ENCODE measurements at regions of chr7 and their contacts with region 1.

Region 1: GRCh38 chr7:7585253-7585928 is 18.7 kb downstream of the MIOS start:
- DNase-seq: no peak
- ATAC-seq: no peak
- H3K4me3 ChIP-seq: no peak overlapping the region
- H3K4me3 Mint-ChIP-seq: no peak overlapping the region
- H3K27ac ChIP-seq: no peak overlapping the region
- H3K27ac Mint-ChIP-seq: no peak overlapping the region
- H3K4me1 ChIP-seq: no peaks in the 10 kb centered on the region
- H3K4me1 Mint-ChIP-seq: peaks cover 10% of the 10 kb centered on the region
- H3K27me3 ChIP-seq: no peaks in the 10 kb centered on the region
- H3K27me3 Mint-ChIP-seq: no peaks in the 10 kb centered on the region
- CTCF ChIP-seq: no peak

Region 2: GRCh38 chr7:7595451-7595850 is 10.1 kb after region 1 on chr7:
- CTCF ChIA-PET with region 1: interaction called, 11 read pairs
- POLR2A ChIA-PET with region 1: interaction called, 3 read pairs
- intact Hi-C with region 1: no loop called
- DNase-seq: peak in 2 of 9 experiments; percentile 39 to 57
- ATAC-seq: peak; percentile 52
- H3K4me3 ChIP-seq: no peak overlapping the region
- H3K4me3 Mint-ChIP-seq: no peak overlapping the region
- H3K27ac ChIP-seq: no peak overlapping the region
- H3K27ac Mint-ChIP-seq: no peak overlapping the region
- H3K4me1 ChIP-seq: no peaks in the 10 kb centered on the region
- H3K4me1 Mint-ChIP-seq: peaks cover 2% of the 10 kb centered on the region
- H3K27me3 ChIP-seq: no peaks in the 10 kb centered on the region
- H3K27me3 Mint-ChIP-seq: no peaks in the 10 kb centered on the region
- CTCF ChIP-seq: peak; percentile 69

Measured in CD8-positive, alpha-beta T cell (primary cell).